Endothelial cell of umbilical vein (primary cell): ENCODE measurements at regions of chr9 and their contacts with region 1.

Region 1: DNA sequence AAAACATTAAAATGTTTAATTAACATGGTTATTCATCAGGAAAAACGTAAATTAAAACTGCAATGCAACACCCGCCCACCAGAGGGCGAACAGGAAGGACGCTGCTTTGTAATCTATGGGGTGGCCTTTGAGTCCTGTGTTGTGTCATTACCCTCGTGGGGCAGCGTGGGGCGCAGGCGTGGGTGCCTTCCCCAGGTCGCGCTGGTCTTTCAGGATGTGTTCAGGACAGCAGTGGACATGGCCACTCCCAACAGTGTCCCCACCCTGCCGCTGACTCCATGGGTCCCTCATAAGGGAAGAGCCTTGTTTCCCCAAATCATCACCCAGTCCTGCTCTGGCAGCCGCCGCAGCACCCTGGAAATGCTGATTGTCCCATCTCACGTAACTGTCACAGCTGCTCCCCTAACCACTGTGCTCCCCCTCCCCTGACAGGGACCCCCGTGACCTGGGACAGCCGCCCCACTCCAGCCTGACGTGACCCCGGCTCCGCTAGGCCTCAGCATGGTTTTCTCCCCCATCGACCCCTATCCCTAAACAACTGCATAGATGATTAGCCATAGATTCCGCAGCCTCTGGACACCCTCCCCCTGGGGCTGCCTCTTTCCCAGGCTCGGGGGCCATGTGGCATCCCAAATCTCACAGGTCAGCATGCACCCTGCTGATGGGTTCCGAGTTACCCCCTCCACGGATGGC is 36.4 kb downstream of the GLT6D1 start:
- DNase-seq: peak; percentile 46
- H3K4me3 ChIP-seq: no peak overlapping the region
- H3K27ac ChIP-seq: no peak overlapping the region
- H3K4me1 ChIP-seq: no peaks in the 10 kb centered on the region
- H3K27me3 ChIP-seq: peaks cover 6% of the 10 kb centered on the region in 2 experiments
- CTCF ChIP-seq: peak; percentile 71 to 72
- POLR2A ChIP-seq: no peak

Region 2: GRCh38 chr9:135500525-135501358 is 102.2 kb before region 1 on chr9 and contains the start of gene MRPS2:
- CTCF ChIA-PET with region 1: interaction called, 6 read pairs
- POLR2A ChIA-PET with region 1: no interaction called
- dilution Hi-C with region 1: no loop called
- intact Hi-C with region 1: loop called (anchors 5 kb)
- DNase-seq: peak; percentile 84
- H3K4me3 ChIP-seq: peak within 1 kb of the TSS; percentile 58 to 92 (median 72)
- H3K27ac ChIP-seq: peak within 1 kb of the TSS; percentile 54
- H3K4me1 ChIP-seq: peaks cover 14% of the 10 kb centered on the region
- H3K27me3 ChIP-seq: no peaks in the 10 kb centered on the region
- CTCF ChIP-seq: peak; percentile 87 to 90
- POLR2A ChIP-seq: peak; percentile 36
- total RNA-seq, gene MRPS2: 48.0 and 50.8 TPM in 2 replicates

Region 3: DNA sequence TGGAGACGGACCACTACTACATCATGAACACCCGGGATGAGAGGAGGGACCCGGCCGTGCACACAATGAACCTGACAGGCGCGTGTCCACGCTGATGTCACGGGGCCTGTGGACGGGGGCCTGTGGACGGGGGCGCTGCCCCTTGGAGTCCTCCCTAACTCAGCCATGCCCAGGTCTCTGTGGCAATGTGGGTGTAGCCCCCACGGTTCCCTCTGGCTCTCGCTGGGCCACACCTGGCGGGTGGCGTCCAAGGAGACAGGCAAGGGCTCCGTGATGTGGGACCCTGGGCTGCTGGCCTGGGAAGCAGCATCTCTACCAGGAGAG is 19.3 kb before region 1 on chr9:
- CTCF ChIA-PET with region 1: no interaction called
- POLR2A ChIA-PET with region 1: no interaction called
- dilution Hi-C with region 1: no loop called
- intact Hi-C with region 1: no loop called
- DNase-seq: no peak
- H3K4me3 ChIP-seq: no peak overlapping the region
- H3K27ac ChIP-seq: no peak overlapping the region
- H3K4me1 ChIP-seq: peaks cover 6% of the 10 kb centered on the region
- H3K27me3 ChIP-seq: no peaks in the 10 kb centered on the region
- CTCF ChIP-seq: no peak
- POLR2A ChIP-seq: no peak

Region 4: GRCh38 chr9:135724186-135724787 is 121.4 kb after region 1 on chr9:
- CTCF ChIA-PET with region 1: interaction called, 7 read pairs
- POLR2A ChIA-PET with region 1: no interaction called
- dilution Hi-C with region 1: no loop called
- intact Hi-C with region 1: loop called (anchors 1 kb)
- DNase-seq: peak; percentile 86
- H3K4me3 ChIP-seq: no peak overlapping the region
- H3K27ac ChIP-seq: peak overlapping the region; percentile 57
- H3K4me1 ChIP-seq: peaks cover 14% of the 10 kb centered on the region
- H3K27me3 ChIP-seq: no peaks in the 10 kb centered on the region
- CTCF ChIP-seq: no peak
- POLR2A ChIP-seq: peak; percentile 63

Region 5: DNA sequence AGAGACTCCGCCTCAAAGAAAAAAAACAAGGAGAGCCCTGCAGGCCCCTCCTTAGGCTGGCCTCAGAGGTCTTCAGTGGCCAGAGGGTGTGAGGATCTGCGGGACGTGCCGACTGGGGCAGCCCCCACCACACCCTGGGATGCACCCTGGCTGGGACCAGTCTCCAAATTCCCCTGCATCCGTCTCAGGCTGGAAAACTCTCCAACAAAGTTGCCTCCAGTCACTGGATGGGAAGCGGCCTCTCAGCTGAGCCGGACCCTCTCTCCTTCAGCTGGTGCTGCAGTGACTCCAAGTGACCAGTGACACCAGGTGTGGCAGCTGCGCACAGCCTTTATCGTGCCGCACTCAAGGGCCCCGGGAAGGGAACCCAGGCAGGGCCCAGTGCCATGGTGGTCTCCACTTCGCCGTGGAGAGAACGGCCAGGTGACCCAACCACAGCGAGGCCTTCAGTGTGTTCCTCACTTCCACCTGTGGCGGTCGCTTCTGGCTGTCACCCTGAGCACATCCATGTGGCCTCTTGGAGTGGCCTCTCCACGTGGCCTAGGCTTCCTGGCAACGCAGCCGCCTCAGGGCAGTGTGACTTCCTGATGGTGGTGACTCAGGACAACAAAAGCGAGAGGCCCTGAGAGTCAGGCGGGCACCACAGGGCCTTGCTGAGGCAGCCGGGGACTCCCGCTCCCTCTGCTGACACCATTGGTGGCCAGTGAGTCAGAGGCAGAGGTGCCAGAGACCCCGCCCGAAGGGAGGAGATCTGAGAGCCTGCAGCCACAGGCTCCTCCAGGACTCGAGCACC is 323.7 kb after region 1 on chr9:
- CTCF ChIA-PET with region 1: no interaction called
- POLR2A ChIA-PET with region 1: no interaction called
- dilution Hi-C with region 1: no loop called
- intact Hi-C with region 1: loop called (anchors 10 kb)
- DNase-seq: peak; percentile 51
- H3K4me3 ChIP-seq: no peak overlapping the region
- H3K27ac ChIP-seq: peak overlapping the region; percentile 15
- H3K4me1 ChIP-seq: peaks cover 7% of the 10 kb centered on the region
- H3K27me3 ChIP-seq: no peaks in the 10 kb centered on the region
- CTCF ChIP-seq: no peak
- POLR2A ChIP-seq: no peak

Region 6: DNA sequence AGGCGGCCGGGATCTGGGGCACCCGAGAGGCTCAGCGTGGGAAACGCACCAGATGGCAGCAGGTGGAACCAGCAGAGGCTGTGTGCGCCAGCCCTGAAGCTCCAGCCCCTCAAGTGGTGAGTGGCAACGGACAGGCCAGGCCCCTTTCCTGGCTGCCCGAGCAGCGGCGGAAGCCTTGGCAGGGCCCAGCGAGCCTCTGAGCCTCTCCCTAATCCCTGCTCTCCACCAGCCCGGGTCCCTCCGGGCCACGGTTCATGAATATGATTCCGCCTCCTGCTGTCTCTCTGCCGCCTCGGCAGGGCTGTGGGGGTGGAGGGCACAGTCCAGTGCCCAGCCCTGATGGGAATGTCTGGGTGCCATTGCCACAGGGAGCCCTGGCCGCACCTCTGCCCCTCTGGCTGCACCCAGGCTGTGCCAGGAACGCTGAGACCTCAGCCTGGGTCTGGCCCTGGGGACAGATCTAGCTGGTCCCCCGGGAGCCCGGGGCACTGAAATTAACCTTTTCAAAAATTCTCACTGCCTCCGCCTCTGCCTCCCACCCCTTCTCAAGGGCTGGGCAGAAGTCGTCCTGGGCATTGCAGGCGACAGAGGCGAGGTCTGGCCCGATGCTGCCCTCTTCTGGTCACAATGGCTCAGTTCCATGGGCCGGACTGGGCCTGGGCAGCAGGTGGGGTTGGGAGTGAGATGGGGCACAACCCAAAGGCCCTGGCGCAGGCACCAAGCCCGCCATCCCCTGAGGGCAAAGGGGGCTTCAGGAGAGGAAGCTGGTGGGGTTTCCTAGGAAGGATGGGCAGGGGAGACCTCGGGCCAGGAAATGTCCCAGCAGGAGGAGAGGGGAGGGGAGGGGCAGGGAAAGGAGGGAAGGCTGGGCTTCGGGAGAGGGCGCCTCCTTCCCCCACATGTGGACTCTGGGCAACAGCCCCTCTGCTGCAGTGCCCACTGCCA is 680.6 kb after region 1 on chr9:
- CTCF ChIA-PET with region 1: no interaction called
- POLR2A ChIA-PET with region 1: no interaction called
- dilution Hi-C with region 1: no loop called
- intact Hi-C with region 1: loop called (anchors 10 kb)
- DNase-seq: peak; percentile 75
- H3K4me3 ChIP-seq: no peak overlapping the region
- H3K27ac ChIP-seq: no peak overlapping the region
- H3K4me1 ChIP-seq: no peaks in the 10 kb centered on the region
- H3K27me3 ChIP-seq: peaks cover 0 to 2% of the 10 kb centered on the region in 2 experiments
- CTCF ChIP-seq: peak; percentile 83 to 92
- POLR2A ChIP-seq: no peak